ENCODE measurements at regions of chr3 and their contacts with region 1.

Region 1: DNA sequence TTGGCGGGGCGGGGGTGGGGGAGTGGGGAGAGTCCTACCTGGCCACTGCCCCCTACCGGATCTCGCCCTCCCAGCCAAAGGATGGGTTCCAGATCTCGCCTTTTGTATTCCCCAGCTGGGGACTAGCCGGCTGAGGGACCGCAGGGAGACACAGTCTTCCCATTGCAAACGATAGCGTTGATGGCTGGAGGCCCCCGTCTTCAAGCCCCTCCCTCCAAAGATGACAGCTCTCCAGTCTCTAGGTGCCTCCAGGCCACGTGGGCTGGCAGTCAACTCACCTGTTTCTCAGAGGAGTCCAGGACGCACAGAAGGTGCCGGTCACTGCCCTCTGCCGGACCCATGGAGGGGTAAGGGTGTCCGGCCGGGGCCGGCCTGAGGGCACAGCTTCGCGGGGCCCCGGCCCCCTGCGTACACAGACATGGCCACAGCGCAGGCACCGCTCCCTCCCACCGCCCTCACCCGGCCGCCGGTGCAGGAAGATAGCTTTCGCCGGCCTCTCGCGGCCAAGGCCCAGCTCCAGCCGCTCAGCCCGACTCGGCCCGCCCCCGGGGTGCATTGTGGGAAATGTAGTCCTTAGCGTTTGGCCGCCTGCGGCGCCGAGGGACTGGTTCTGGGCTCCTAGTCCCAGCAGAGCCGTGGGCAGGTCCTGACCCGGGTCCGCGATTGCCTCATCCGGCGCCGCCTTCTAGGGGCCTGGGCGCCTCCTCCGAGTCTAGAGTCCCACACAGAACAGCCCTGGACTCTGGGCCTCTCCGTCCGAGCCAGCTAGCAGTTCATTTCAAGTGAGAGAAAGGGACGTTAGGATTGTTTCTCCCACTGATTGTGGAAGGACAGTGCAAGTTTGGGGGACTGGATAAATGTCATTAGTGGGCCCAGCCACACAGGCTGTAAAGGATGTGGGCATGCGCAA is at the start of gene MON1A:
- DNase-seq: peak; percentile 90 to 94
- H3K4me3 ChIP-seq: peak within 1 kb of the TSS; percentile 64 to 86 (median 72)
- H3K27ac ChIP-seq: peak within 1 kb of the TSS; percentile 77 to 87
- H3K4me1 ChIP-seq: peaks cover 0 to 6% of the 10 kb centered on the region in 2 donors
- H3K27me3 ChIP-seq: no peaks in the 10 kb centered on the region
- CTCF ChIP-seq: peak in 2 of 3 donors; percentile 21 to 24
- POLR2A ChIP-seq: peak; percentile 48
- total RNA-seq, gene MON1A: 9.1 to 12.5 (median 11.3) TPM

Region 2: DNA sequence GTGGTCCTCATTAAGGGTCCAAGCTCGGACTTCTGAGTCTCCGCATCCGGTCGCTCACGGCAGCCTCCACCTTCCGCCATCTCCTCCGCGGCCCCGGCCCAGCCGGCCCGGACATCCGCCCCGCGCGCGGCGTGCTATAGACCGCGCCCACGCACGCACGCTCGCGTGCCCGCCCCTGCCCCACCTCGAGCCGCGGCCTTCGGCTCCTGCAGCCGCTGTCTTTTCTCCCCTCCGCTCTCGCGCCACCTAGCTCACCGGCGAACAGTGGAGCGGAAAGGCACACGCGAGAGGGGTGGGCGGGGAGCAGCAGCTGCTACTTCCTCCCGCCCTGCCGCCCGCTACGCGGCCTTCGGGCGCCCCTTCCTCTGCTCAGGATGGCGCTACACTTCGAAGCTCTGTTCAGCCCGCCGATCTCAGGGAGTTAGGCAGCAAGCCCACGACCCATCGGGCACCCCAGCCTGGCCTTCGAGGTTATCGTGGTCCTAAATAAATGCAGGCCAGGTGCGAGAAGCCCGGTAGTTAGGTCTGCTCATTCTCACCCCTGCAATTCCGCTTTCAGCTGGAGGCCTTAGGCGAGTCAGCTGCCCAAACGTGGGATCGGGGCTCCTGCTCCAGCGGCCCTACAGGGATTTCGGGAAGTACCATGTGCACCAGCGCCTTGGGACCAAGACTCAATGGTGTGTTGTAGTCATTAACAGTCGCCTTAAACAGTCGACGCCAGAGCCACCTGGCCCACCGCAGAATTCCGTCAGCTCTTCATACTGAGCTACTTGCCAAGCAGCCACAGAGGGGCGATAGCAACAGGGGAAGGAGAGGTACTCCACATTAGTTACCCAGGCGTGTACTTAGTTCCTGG is 589.4 kb before region 1 on chr3 and contains the start of gene USP4:
- intact Hi-C with region 1: loop called (anchors 5 kb)
- DNase-seq: peak; percentile 85 to 87
- H3K4me3 ChIP-seq: peak within 1 kb of the TSS; percentile 71 to 95 (median 88)
- H3K27ac ChIP-seq: peak within 1 kb of the TSS; percentile 90 to 98
- H3K4me1 ChIP-seq: peaks cover 0 to 6% of the 10 kb centered on the region in 2 donors
- H3K27me3 ChIP-seq: no peaks in the 10 kb centered on the region
- CTCF ChIP-seq: peak in 1 of 3 donors; percentile 23
- POLR2A ChIP-seq: no peak
- total RNA-seq, gene USP4: 26.3 to 32.8 (median 29.9) TPM

Region 3: GRCh38 chr3:49972656-49973055 is 43.1 kb after region 1 on chr3:
- intact Hi-C with region 1: no loop called
- DNase-seq: no peak
- H3K4me3 ChIP-seq: no peak overlapping the region
- H3K27ac ChIP-seq: no peak overlapping the region
- H3K4me1 ChIP-seq: no peaks in the 10 kb centered on the region
- H3K27me3 ChIP-seq: no peaks in the 10 kb centered on the region
- CTCF ChIP-seq: no peak
- POLR2A ChIP-seq: no peak

Measured in breast epithelium (tissue), 4 donors.